ACHN (cell line): ENCODE measurements at regions of chr1 and their contacts with region 1.

Region 1: DNA sequence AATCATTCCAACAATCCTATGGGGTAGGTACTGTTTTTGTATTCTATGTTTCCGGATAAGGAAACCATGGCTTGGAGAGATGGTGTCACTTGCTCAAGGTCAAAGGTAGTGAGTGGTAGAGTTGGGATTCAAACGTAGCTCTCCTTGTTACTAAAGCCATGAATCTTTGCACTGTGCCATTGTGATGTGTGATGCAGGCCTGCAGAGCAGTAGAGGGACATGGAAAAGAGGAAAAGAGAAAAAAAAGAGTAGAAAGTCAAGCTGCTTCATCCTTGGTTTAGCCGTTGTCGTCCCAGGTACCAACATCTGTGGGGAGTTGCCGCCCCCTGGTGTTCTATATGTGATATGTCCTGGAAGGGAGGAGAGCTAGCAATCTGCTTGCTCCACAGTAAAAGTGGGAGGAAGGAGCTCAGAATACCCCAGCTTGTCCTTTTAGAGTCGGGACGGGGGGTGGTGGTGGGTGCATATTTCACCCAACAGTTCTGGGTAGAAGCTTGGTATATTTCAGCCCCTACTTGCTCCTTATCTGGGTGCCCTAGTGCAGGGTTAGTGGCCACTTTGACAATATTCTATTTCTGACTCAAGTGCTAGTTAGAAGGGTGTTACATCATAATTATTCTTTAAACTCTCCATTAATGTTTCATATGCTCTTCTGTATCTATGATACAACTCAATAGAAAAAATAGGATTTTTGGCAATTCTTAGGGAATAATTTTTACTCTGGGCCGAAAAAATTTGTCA is 98.4 kb downstream of the EBNA1BP2 start:
- DNase-seq: peak; percentile 66

Region 2: DNA sequence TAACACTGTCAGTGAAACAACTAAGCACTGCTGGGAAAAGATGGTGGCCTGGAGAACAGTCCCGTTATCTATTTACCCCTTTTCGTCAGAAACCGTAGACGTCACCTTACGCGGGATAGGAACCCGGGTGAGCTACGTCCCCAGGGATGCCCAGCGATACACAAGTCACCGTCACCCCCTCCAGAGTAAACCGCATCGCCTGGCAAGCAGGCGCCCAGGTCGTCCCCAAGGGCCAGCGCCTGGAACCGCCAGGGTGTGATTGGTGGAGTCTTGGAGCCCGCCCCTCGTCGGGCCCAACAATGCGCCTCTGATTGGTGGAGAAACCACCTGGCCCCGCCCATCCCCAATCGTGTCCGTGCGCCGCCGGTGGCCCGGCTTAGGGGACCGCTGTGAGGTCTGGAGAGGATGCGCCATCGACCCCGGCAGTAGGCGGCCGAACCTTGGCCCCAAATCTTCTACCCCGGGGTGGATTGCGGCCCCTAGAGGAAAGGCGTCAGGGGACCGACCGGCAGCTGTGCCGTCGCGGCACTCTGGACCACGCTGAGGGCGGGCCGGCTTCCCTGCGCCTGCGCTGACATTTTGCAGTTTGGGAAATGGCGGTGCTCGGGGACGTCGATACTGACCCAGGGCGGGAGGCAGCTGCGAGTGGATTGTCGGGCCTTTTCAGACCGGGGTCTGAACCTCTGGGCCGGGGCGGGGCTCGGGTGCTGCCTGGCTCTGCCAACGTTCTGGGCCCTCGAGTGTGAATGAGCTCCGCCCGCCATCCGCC is 149.4 kb before region 1 on chr1:
- in situ Hi-C with region 1: loop called (anchors 25 kb)
- DNase-seq: peak; percentile 87